OCI-LY7 (cell line): ENCODE measurements at regions of chr11 and their contacts with region 1.

Region 1: DNA sequence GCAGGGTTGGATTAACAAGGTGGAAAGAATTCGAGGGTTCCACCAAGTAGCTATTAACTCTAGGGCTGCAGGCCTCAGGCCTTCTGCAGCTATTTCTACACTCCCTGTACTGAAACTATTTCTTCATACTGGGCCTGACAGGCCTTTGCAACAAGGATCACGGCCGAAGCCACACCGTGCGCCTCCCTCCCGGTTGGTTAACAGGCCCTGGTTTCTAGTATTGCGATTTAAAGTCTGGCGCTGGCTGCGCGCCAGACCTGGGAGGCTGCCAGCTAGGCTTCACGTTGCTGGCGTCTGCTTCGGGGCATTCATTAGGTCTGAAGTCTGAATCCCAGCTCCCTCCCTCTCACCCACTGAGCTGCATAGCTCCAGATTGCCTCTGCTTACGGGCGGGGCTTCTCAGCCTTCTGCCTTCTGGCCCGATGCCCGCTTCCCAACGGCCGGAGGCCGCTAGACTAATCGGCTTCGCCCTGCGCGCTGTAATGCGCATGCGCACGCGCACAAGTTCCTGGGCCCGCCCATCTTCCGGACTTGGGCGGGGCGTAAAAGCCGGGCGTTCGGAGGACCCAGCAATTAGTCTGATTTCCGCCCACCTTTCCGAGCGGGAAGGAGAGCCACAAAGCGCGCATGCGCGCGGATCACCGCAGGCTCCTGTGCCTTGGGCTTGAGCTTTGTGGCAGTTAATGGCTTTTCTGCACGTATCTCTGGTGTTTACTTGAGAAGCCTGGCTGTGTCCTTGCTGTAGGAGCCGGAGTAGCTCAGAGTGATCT is 1.6 kb downstream of the LDHA start:
- DNase-seq: peak; percentile 98
- H3K4me3 ChIP-seq: peak overlapping the region; percentile 89
- H3K27ac ChIP-seq: peak overlapping the region; percentile 90
- H3K4me1 ChIP-seq: peaks cover 30% of the 10 kb centered on the region
- CTCF ChIP-seq: no peak

Region 2: DNA sequence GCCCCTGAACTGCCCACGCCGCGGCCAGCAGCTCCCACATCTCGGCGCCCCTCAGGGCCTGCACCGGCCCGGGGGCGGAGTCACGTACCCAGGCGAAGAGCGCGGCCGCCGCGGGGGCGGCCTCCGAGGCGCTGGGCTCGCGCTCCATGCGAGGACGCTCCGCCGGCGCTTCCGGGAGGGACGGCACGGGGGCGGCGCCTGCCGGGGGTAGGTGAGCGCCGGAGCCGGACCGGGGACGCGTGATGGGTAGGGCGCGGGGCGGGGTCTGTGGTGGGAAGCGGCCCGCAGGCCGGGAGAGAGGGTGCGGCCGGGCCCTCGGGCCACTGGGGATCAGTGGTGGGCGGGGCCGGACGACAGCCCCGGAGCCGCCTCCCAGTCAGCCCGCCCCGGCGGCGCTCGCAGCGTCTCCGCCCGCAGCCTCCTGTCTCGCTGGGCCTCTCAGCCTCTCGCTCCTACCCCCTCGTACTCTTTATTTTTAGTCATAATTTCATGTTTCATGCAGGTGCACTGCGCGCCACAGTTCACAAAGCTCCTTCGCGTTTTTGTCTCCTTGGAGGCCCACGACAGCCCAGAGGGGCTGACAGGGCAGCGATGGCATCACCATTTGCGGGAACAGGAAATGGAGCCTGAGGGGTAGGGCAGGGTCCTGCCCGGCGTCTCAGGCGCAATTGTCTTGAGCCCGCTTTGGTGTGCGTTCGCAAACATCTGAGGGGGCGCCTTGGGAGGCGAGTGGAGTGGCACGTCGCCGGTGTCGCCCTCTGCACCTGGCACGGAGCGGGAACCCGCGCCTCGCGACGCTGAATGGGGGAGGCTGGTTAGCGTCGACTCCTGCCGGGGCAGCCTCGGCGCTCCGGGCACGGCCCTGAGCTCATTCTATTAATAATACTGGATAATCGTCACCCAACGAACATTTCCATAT is 382.8 kb before region 1 on chr11 and contains the start of gene SERGEF:
- CTCF ChIA-PET with region 1: interaction called, 5 read pairs
- POLR2A ChIA-PET with region 1: no interaction called
- intact Hi-C with region 1: loop called (anchors 2 kb)
- DNase-seq: peak; percentile 95
- H3K4me3 ChIP-seq: peak within 1 kb of the TSS; percentile 76
- H3K27ac ChIP-seq: peak within 1 kb of the TSS; percentile 42
- H3K4me1 ChIP-seq: peaks cover 25% of the 10 kb centered on the region
- CTCF ChIP-seq: no peak
- total RNA-seq, gene SERGEF: 35.4 and 47.1 TPM in 2 replicates

Region 3: DNA sequence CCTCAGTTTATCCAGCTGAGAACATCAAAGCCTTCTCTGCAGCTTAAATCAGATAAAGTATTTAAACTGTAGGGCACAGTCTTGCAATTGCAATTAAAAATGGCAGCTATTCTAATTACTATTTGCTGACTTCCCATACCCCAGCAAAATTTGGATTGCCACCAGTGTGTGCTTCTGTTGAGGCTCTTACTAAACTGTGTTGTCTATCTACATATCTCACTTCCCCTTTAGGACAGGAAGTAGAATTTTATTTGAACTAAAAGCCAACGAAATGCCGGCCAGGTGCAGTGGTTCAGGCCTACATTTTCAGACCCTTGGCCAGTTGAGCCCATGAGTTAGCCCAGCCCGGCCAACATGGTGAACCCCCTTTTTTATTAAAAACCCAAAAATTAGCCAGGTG is 166.4 kb before region 1 on chr11:
- CTCF ChIA-PET with region 1: no interaction called
- POLR2A ChIA-PET with region 1: interaction called, 28 read pairs
- intact Hi-C with region 1: loop called (anchors 2 kb)
- DNase-seq: peak; percentile 96
- H3K4me3 ChIP-seq: peak overlapping the region; percentile 63
- H3K27ac ChIP-seq: peak overlapping the region; percentile 100
- H3K4me1 ChIP-seq: peaks cover 77% of the 10 kb centered on the region
- CTCF ChIP-seq: no peak

Region 4: GRCh38 chr11:18364495-18365073 is 31.3 kb before region 1 on chr11:
- CTCF ChIA-PET with region 1: no interaction called
- POLR2A ChIA-PET with region 1: interaction called, 11 read pairs
- intact Hi-C with region 1: no loop called
- DNase-seq: no peak
- H3K4me3 ChIP-seq: no peak overlapping the region
- H3K27ac ChIP-seq: no peak overlapping the region
- H3K4me1 ChIP-seq: no peaks in the 10 kb centered on the region
- CTCF ChIP-seq: no peak

Region 5: GRCh38 chr11:18634140-18635032 is 238.5 kb after region 1 on chr11 and contains the start of gene SPTY2D1:
- CTCF ChIA-PET with region 1: no interaction called
- POLR2A ChIA-PET with region 1: interaction called, 16 read pairs
- intact Hi-C with region 1: no loop called
- DNase-seq: peak; percentile 100
- H3K4me3 ChIP-seq: peak within 1 kb of the TSS; percentile 90
- H3K27ac ChIP-seq: peak within 1 kb of the TSS; percentile 67
- H3K4me1 ChIP-seq: peaks cover 16% of the 10 kb centered on the region
- CTCF ChIP-seq: no peak
- total RNA-seq, gene SPTY2D1: 15.6 and 15.8 TPM in 2 replicates